Activated naive CD4-positive, alpha-beta T cell treated with anti-CD3 and anti-CD28 coated beads for 36 hours (primary cell): ENCODE measurements at regions of chr10 and their contacts with region 1.

Region 1: DNA sequence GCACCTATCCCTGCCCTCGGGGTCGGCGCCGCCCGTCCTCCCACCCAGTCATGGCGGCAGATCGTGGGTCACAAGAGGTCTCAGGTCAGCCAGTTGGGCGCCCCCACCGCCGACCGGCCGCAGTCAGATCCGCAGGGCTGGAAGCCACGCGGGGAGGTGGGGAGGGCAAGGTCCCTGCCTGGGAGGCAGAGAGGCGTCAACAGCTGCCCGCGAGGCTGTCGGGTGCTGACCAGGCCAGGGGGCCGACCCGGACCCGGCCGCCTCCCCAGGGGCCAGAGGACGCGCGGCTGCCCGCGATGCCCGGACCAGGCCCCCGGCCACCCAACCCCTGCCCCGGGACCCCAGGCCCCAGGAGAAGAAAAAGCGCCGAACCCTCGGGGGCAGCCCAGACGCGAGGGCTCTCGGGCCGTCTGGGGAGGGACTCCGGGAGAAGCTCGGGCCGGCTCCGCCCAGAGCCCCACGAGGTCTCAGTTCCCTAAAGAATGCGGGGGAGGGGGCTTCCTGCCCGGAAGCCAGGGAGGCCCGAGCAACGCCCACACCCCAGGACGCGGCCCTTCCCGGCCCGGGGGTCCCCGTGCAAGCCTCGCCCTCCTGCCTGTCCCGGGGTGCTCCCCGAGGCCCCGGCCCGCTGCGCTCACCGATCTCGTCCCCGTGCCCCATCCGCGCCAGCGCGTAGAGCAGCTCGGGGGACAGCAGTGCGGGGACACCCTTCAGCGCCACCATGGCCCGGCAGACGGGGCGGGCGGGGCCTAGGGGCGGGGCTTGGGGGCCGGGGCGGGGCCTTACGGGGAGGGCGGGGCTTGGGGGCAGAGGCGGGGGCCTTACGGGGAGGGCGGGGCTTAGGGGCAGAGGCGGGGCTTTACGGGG is at the start of gene FUOM:
- DNase-seq: peak; percentile 75
- H3K4me3 Mint-ChIP-seq: peak within 1 kb of the TSS; percentile 77
- H3K27ac Mint-ChIP-seq: no peak within 1 kb of the TSS
- H3K4me1 Mint-ChIP-seq: peaks cover 3% of the 10 kb centered on the region
- H3K27me3 Mint-ChIP-seq: no peaks in the 10 kb centered on the region
- total RNA-seq, gene FUOM: 29.9 to 34.9 TPM

Region 2: DNA sequence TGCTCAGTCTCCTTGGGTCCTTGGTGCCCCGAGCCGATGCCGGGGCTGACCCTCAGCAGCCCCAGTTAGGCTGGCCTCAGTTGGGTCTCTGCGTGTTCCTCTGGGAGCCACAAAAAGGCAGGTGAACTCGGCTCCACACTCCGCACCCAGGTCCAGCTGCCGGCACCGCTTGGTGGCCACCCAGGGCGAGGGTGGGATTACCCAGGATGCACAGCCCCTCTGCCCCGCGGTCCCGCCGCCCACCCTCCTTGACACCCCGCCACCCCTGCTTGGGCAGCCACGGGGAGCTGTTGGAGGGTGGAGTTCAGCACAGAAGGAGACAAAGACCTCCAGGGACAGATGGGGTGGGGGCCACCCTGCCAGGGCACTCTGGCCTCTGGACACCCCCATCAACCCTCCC is 102.2 kb before region 1 on chr10:
- CTCF ChIA-PET with region 1: no interaction called
- intact Hi-C with region 1: no loop called
- DNase-seq: no peak
- H3K4me3 Mint-ChIP-seq: no peak overlapping the region
- H3K27ac Mint-ChIP-seq: no peak overlapping the region
- H3K4me1 Mint-ChIP-seq: peaks cover 33% of the 10 kb centered on the region
- H3K27me3 Mint-ChIP-seq: no peaks in the 10 kb centered on the region

Region 3: DNA sequence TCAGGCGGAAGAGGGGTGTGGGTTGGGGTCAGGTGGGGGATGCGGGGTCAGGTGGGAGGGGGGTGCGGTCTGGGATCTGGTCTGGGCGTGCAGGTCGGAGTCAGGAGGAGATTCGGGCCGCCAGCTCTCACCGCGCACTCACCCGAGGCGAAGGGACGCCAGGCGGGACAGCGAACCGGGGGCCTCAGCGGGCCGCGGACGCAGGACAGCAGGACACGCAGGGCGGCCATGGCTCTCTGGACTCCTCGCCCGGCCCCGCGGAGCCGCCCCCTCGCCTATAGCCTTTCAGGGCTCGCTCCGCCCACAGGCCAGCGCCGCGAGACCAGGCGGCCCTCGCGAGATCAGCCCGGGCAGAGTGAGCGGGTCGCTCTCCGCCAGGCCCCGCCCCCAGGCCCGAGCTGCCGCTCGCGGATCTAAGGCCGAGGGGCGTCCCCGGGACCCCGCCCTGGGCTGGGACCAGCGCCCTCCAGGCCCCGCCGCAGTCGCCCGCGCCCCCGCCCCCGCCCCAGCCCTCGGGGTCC is 15.6 kb after region 1 on chr10 and contains the start of gene ECHS1:
- CTCF ChIA-PET with region 1: no interaction called
- intact Hi-C with region 1: loop called (anchors 1 kb)
- DNase-seq: peak; percentile 96
- H3K4me3 Mint-ChIP-seq: peak within 1 kb of the TSS; percentile 77
- H3K27ac Mint-ChIP-seq: no peak within 1 kb of the TSS
- H3K4me1 Mint-ChIP-seq: peaks cover 12% of the 10 kb centered on the region
- H3K27me3 Mint-ChIP-seq: no peaks in the 10 kb centered on the region
- total RNA-seq, gene ECHS1: 45.8 to 48.7 TPM

Region 4: DNA sequence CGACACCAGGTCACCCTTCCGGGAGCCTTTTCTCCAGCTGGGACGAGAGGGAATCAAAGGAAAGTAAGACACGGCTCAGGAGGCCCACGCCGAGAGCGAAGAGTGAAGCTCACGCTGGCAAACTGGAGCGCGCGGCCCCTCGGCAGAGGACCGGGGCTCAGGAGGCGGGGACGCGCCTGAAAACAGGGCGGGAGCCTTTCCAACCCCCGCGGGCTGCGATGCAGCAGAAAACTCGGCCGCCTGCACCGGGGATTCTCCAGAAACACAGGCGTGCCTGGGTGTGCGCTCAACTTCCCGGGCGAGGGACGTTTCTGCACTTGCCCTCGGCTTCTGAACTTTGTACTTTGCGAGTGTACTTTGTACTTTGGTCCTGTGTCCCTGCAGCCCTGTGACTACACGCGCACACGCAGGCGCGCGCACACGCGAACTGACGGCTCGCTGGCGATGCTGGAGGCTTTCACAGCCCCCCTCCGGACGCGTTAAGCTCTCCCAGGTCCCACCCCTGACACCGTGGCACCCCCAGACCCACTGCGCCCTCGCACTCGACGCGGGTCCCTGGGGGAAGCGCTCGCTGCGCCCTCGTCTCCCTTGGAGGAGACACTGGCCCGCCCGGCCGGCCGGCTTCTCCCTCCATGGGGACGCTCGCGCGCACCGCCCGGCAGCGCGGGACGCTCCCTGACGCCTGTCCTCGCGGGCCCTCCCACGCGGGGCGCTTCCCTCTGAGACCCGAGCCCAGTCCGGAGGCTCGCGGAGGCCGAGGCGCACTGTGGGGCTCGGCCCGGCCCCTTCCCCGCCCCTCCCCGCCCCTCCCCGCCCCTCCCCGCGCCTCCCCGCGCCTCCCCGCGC is 21.0 kb after region 1 on chr10:
- CTCF ChIA-PET with region 1: no interaction called
- intact Hi-C with region 1: loop called (anchors 1 kb)
- DNase-seq: peak; percentile 61
- H3K4me3 Mint-ChIP-seq: peak overlapping the region; percentile 74
- H3K27ac Mint-ChIP-seq: peak overlapping the region; percentile 30
- H3K4me1 Mint-ChIP-seq: peaks cover 5% of the 10 kb centered on the region
- H3K27me3 Mint-ChIP-seq: no peaks in the 10 kb centered on the region